Mammary epithelial cell (primary cell): ENCODE measurements at regions of chr6 and their contacts with region 1.

Region 1: GRCh38 chr6:15351631-15352030 is 105.8 kb downstream of the JARID2 start:
- DNase-seq: peak; percentile 62
- H3K4me3 ChIP-seq: no peak overlapping the region
- H3K27ac ChIP-seq: no peak overlapping the region
- H3K4me1 ChIP-seq: peaks cover 16% of the 10 kb centered on the region
- H3K27me3 ChIP-seq: no peaks in the 10 kb centered on the region
- CTCF ChIP-seq: no peak

Region 2: GRCh38 chr6:15389765-15390723 is 38.4 kb after region 1 on chr6:
- CTCF ChIA-PET with region 1: no interaction called
- dilution Hi-C with region 1: loop called (anchors 5 kb)
- in situ Hi-C with region 1: no loop called
- intact Hi-C with region 1: no loop called
- DNase-seq: no peak
- H3K4me3 ChIP-seq: no peak overlapping the region
- H3K27ac ChIP-seq: no peak overlapping the region
- H3K4me1 ChIP-seq: peaks cover 10% of the 10 kb centered on the region
- H3K27me3 ChIP-seq: no peaks in the 10 kb centered on the region
- CTCF ChIP-seq: peak; percentile 28 to 47

Region 3: GRCh38 chr6:15526212-15526701 is 174.6 kb after region 1 on chr6:
- CTCF ChIA-PET with region 1: no interaction called
- dilution Hi-C with region 1: no loop called
- in situ Hi-C with region 1: no loop called
- intact Hi-C with region 1: no loop called
- DNase-seq: no peak
- H3K4me3 ChIP-seq: no peak overlapping the region
- H3K27ac ChIP-seq: no peak overlapping the region
- H3K4me1 ChIP-seq: no peaks in the 10 kb centered on the region
- H3K27me3 ChIP-seq: no peaks in the 10 kb centered on the region
- CTCF ChIP-seq: no peak